Activated CD4-positive, alpha-beta T cell treated with anti-CD3 and anti-CD28 coated beads for 36 hours (primary cell): ENCODE measurements at regions of chr20 and their contacts with region 1.

Region 1: GRCh38 chr20:41232973-41233926 is 84.3 kb downstream of the ZHX3 start:
- DNase-seq: no peak
- ATAC-seq: no peak
- H3K4me3 Mint-ChIP-seq: no peak overlapping the region
- H3K27ac Mint-ChIP-seq: peak overlapping the region; percentile 1
- H3K4me1 Mint-ChIP-seq: peaks cover 18% of the 10 kb centered on the region
- H3K27me3 Mint-ChIP-seq: no peaks in the 10 kb centered on the region

Region 2: DNA sequence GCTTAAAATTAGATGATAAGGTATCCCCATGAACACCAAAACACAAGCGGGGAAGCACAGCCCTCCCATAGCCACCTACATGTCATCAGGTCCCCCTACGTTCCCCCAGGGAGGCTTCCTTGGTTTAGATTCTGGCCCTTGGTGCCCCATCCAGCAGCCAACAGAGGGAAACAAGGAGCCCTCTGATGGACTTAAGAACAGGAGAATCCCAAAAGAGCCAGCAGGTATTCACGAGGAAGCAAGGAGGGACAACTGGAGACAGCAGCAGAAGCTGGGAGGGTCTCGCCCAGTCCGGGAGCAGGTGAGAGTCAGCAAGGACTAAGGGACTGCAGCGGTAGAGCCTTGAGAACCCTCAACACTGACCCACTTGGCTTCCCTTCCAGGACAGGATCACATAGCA is 263.0 kb before region 1 on chr20:
- CTCF ChIA-PET with region 1: no interaction called
- POLR2A ChIA-PET with region 1: no interaction called
- intact Hi-C with region 1: loop called (anchors 1 kb)
- DNase-seq: no peak
- ATAC-seq: no peak
- H3K4me3 Mint-ChIP-seq: no peak overlapping the region
- H3K27ac Mint-ChIP-seq: no peak overlapping the region
- H3K4me1 Mint-ChIP-seq: peaks cover 9% of the 10 kb centered on the region
- H3K27me3 Mint-ChIP-seq: peaks cover 6% of the 10 kb centered on the region

Region 3: GRCh38 chr20:41161886-41162285 is 71.4 kb before region 1 on chr20:
- CTCF ChIA-PET with region 1: interaction called, 6 read pairs
- POLR2A ChIA-PET with region 1: no interaction called
- intact Hi-C with region 1: loop called in 1 of 2 experiments (anchors 1 kb)
- DNase-seq: no peak
- ATAC-seq: no peak
- H3K4me3 Mint-ChIP-seq: no peak overlapping the region
- H3K27ac Mint-ChIP-seq: peak overlapping the region; percentile 72
- H3K4me1 Mint-ChIP-seq: peaks cover 59% of the 10 kb centered on the region
- H3K27me3 Mint-ChIP-seq: no peaks in the 10 kb centered on the region

Region 4: GRCh38 chr20:41173161-41173721 is 60.0 kb before region 1 on chr20:
- CTCF ChIA-PET with region 1: interaction called, 25 read pairs
- POLR2A ChIA-PET with region 1: no interaction called
- intact Hi-C with region 1: loop called (anchors 1 kb)
- DNase-seq: peak; percentile 78
- ATAC-seq: peak; percentile 78
- H3K4me3 Mint-ChIP-seq: no peak overlapping the region
- H3K27ac Mint-ChIP-seq: peak overlapping the region; percentile 65
- H3K4me1 Mint-ChIP-seq: peaks cover 6% of the 10 kb centered on the region
- H3K27me3 Mint-ChIP-seq: no peaks in the 10 kb centered on the region

Region 5: DNA sequence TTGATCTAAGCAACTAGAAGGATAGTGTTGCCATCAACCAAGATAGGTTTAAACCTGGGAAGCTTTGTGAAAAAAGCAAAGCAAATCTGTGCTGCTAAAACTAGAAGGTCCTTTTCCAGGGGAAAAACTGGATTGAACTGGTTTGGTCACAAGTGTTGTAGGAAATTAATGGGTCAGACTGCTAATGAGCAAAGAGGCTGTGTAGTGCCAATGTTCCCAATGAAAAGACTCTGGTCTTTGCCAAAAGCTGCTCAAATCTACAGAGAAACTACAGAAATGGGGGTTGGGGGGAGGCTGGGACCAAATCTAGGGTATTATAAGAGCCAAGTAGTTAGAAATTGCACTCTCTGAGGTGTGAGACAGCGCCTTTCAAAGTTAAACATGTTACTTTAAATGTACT is 11.0 kb before region 1 on chr20:
- CTCF ChIA-PET with region 1: interaction called, 18 read pairs
- POLR2A ChIA-PET with region 1: no interaction called
- intact Hi-C with region 1: no loop called
- DNase-seq: no peak
- ATAC-seq: no peak
- H3K4me3 Mint-ChIP-seq: no peak overlapping the region
- H3K27ac Mint-ChIP-seq: no peak overlapping the region
- H3K4me1 Mint-ChIP-seq: no peaks in the 10 kb centered on the region
- H3K27me3 Mint-ChIP-seq: no peaks in the 10 kb centered on the region

Region 6: DNA sequence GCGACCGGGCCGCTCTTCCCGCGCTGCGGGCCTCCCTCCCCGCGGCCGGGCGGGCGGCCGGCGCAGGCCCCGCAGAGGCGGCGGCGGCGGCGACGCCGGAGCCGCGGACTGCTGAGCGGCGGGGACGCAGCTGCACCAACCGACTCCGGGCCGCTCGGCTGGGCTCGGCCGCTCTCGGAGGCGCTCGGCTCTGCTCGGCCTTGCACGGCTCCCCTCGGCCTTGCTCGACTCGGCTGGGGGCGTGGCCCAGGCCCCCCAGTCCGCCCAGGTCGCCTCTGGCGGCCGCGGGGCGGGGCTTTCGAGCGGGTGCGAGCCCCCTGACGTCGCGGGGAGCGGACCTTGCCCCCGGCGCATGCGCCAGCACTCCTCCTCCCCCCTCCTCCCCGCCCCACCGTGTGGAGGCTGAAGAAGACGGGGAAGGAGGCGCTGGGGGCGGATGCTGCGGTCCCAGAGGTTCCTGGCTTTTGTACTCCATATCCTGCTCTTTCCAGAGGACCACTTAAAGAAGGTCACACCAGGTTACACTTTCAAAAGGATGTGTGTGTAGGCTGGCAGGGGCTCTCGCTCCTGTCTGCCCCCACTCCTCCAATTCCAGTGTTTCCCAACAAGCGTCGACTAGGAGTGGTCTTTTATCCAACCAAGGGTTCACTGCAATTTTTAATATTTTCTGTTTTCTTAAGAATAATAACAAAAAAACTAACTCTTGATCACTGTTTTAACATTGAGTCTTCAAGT is 84.5 kb after region 1 on chr20 and contains the start of gene ZHX3:
- CTCF ChIA-PET with region 1: no interaction called
- POLR2A ChIA-PET with region 1: no interaction called
- intact Hi-C with region 1: loop called in 1 of 2 experiments (anchors 1 kb)
- DNase-seq: peak; percentile 98
- ATAC-seq: peak; percentile 99
- H3K4me3 Mint-ChIP-seq: peak within 1 kb of the TSS; percentile 84
- H3K27ac Mint-ChIP-seq: peak within 1 kb of the TSS; percentile 66
- H3K4me1 Mint-ChIP-seq: peaks cover 31% of the 10 kb centered on the region
- H3K27me3 Mint-ChIP-seq: no peaks in the 10 kb centered on the region
- total RNA-seq, gene ZHX3: 12.8 to 15.4 TPM